ENCODE measurements at regions of chr1 and their contacts with region 1.

Region 1: DNA sequence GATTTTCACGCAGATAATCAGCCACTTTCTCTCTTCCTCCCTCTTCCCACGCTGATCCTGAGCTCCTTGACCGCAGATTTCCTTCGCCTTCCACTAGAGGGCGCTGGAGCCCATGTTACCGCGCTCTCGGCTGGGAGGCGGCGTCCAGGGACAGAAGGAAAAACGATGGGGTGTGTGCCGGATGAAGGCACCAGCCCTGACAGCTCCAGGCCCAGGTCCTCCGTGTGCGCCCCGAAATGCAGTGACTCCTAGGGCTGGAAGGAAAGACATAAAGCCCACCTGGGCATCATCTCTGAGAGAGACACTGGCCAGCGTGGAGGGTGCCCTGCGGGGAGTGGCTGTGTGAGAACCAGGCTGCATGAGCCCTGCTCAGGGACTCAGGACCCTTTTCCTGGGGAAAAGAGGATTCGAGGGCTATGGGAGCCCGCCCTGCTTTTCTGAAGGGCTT is 44.9 kb upstream of the CYP2J2 start:
- DNase-seq: peak; percentile 60
- H3K4me3 ChIP-seq: no peak overlapping the region
- H3K27ac ChIP-seq: no peak overlapping the region
- H3K4me1 ChIP-seq: peaks cover 11% of the 10 kb centered on the region
- H3K27me3 ChIP-seq: no peaks in the 10 kb centered on the region
- CTCF ChIP-seq: peak; percentile 72 to 89 (median 86)
- POLR2A ChIP-seq: no peak

Region 2: GRCh38 chr1:60281360-60281932 is 310.0 kb after region 1 on chr1:
- intact Hi-C with region 1: loop called (anchors 10 kb)
- DNase-seq: peak; percentile 63
- H3K4me3 ChIP-seq: no peak overlapping the region
- H3K27ac ChIP-seq: no peak overlapping the region
- H3K4me1 ChIP-seq: no peaks in the 10 kb centered on the region
- H3K27me3 ChIP-seq: no peaks in the 10 kb centered on the region
- CTCF ChIP-seq: peak; percentile 71 to 88 (median 82)
- POLR2A ChIP-seq: no peak

Region 3: DNA sequence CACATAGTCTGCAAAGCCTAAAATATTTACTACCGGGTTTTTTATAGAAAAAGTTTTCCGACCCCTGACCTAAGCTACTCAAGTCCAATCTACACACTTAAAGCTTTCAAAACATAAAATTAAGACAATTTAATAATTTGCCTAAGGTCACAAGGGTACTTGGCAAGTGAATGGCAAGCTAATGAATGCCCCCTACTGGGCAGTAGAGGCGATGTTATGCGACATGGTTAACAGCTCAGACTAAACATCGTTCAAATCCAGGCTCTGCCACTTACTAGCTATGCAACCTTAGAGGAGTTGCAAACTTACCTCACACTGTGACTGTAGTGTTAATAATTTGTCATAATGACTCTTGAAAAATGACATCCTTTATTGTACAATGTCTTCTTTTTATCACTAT is 793.7 kb after region 1 on chr1:
- intact Hi-C with region 1: loop called (anchors 10 kb)
- DNase-seq: peak; percentile 7
- H3K4me3 ChIP-seq: no peak overlapping the region
- H3K27ac ChIP-seq: no peak overlapping the region
- H3K4me1 ChIP-seq: no peaks in the 10 kb centered on the region
- H3K27me3 ChIP-seq: no peaks in the 10 kb centered on the region
- CTCF ChIP-seq: peak in 3 of 4 experiments; percentile 35 to 52 (median 44)
- POLR2A ChIP-seq: no peak

Measured in prostate gland (tissue), 2 donors.